Activated CD4-positive, alpha-beta T cell treated with anti-CD3 and anti-CD28 coated beads for 36 hours (primary cell): ENCODE measurements at regions of chr7 and their contacts with region 1.

Region 1: DNA sequence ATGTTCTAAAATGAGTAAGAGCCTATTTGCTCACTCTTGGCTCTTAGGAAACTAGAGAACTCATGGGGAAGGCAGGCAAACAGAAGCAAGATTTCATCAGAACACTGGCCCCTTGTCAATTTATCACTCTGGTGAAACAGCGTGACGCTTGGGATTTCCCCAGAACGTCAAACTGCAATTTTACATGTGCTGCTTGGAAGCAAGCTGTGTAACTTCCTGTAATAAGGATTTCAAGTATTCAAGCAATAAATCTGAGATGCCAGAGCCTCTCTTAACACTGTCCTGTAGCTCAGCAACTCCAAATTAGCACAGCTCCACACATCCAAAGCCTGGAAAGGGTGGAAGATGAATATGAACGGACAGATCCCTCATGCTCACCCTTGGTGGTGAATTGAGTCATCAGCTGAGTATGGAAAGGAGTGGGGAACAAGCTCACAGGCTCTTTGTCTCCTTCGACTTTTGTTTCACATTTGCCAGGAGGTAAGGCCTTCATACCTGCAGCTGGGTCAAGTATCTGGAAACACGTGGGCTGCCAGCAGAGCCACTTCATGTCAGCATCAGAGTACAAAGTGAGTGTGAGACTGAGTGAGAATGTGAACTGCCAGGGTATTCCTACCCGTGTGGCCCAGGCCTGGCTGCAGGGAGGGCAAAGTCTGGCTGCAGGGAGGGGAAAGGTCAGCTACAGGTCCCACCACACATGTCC is 140.4 kb upstream of the NAMPT start:
- DNase-seq: peak; percentile 89
- ATAC-seq: peak; percentile 79
- H3K4me3 Mint-ChIP-seq: peak overlapping the region; percentile 70
- H3K27ac Mint-ChIP-seq: peak overlapping the region; percentile 99
- H3K4me1 Mint-ChIP-seq: peaks cover 88% of the 10 kb centered on the region
- H3K27me3 Mint-ChIP-seq: peaks cover 2% of the 10 kb centered on the region

Region 2: DNA sequence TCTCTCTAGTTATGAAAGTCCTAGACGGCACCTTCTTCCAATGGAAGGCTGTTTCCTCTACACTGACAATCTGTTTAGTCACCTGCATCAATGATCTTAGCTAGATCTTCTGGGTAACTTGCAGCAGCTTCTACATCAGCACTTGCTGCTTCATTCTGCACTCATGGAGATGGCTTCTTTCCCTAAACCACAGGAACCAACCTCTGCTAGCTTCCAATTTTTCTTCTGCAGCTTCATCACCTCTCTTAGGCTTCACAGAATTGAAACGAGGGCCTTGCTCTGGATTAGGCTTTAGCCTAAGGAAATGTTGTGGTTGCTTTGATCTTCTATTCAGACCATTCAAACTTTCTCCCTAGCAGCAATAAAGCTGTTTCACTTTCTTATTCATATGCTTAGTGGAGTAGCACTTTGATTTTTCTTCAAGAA is 165.0 kb before region 1 on chr7:
- CTCF ChIA-PET with region 1: no interaction called
- POLR2A ChIA-PET with region 1: interaction called, 4 read pairs
- intact Hi-C with region 1: loop called in 1 of 2 experiments (anchors 1 kb)
- DNase-seq: no peak
- ATAC-seq: peak; percentile 21
- H3K4me3 Mint-ChIP-seq: no peak overlapping the region
- H3K27ac Mint-ChIP-seq: peak overlapping the region; percentile 83
- H3K4me1 Mint-ChIP-seq: peaks cover 81% of the 10 kb centered on the region
- H3K27me3 Mint-ChIP-seq: no peaks in the 10 kb centered on the region

Region 3: DNA sequence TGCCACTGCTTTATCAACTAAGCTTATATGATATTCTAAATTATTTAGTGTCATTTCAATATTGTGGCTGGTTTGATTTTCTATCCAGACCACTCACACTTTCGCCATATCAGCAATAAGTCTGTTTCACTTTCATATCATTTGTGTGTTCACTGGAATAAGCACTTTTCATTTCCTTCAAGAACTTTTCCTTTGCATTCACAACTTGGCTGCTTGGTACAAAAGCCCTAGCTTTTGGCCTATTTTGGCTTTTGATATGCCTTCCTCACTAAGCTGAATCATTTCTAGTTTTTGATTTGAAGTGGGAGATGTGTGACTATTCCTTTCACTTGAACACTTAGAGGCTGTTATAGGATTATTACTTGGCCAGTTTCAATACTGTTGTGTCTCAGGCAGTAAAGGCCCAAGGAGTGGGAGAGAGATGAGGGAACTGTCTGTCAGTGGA is 19.4 kb before region 1 on chr7:
- CTCF ChIA-PET with region 1: interaction called, 5 read pairs
- POLR2A ChIA-PET with region 1: interaction called, 13 read pairs
- intact Hi-C with region 1: loop called (anchors 1 kb)
- DNase-seq: peak; percentile 39
- ATAC-seq: peak; percentile 98
- H3K4me3 Mint-ChIP-seq: peak overlapping the region; percentile 8
- H3K27ac Mint-ChIP-seq: peak overlapping the region; percentile 55
- H3K4me1 Mint-ChIP-seq: peaks cover 38% of the 10 kb centered on the region
- H3K27me3 Mint-ChIP-seq: peaks cover 35% of the 10 kb centered on the region

Region 4: DNA sequence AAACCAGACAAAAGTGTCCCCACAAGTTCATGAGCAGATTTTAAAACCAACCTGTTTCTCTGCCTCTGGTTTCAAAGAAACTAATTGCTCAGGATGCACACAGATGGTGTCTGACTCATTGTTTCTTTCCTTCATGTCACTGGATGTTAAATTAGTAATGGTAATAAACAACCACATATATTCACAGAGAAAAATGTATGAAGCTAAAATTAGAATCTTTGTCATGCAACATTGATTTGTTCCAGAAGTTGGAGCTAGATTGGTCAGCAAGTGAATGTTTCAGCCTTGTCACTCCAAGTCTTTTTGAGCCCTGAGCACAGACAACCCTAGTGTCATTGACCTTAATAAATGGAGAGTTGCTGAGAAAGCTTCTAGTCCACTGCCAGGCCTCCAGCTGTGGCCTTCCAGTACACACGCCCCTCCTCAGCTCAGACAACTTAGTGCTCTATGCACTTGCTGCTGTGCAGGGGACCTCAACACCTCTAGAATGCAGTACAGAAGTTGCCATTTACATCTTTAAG is 59.9 kb after region 1 on chr7:
- CTCF ChIA-PET with region 1: interaction called, 5 read pairs
- POLR2A ChIA-PET with region 1: interaction called, 12 read pairs
- intact Hi-C with region 1: loop called (anchors 1 kb)
- DNase-seq: no peak
- ATAC-seq: peak; percentile 73
- H3K4me3 Mint-ChIP-seq: no peak overlapping the region
- H3K27ac Mint-ChIP-seq: peak overlapping the region; percentile 80
- H3K4me1 Mint-ChIP-seq: peaks cover 60% of the 10 kb centered on the region
- H3K27me3 Mint-ChIP-seq: peaks cover 10% of the 10 kb centered on the region

Region 5: DNA sequence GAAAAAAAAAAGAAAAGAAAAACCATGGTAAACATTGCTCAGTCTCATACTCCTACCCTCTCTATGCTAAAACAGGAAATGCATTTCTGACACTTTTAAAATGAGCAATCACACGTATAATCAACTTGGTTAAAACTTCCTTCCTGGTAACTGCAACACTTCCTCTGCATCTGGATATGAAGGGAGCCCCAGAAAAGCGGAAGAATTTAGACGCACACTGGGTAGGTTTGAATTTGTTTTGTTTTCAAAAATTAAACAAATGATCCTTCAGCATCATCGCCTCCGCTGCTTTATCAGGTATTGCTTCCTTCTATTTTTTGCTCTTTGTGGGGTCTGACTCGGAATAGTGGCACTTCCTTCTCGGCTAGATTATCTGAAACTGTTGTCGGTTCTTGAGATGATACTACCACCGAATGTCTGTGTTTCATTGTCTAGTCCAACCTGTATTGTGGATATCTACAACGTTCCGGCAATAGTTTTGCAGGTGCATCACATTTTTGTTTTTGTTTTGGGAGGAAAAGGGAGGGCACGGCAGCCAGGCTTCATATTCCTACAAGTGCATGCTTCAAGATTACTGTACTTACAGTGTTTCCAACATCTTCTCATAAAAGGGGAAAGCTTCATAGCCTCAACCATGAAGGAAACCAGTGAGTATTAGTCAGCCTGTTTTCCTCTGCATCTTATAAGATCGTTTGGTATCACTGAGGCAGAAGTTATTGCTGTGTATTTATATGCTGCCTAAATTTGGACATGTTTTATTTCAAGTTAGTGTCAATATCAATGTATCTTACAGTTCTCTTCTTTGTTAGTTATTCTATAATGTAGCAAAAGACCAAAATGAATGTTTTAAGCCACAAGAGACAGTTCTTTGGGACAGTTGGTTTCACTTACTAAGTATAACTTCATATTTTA is 440.2 kb after region 1 on chr7 and contains the start of gene PIK3CG:
- CTCF ChIA-PET with region 1: no interaction called
- POLR2A ChIA-PET with region 1: no interaction called
- intact Hi-C with region 1: loop called in 1 of 2 experiments (anchors 5 kb)
- DNase-seq: no peak
- ATAC-seq: peak; percentile 79
- H3K4me3 Mint-ChIP-seq: peak within 1 kb of the TSS; percentile 83
- H3K27ac Mint-ChIP-seq: peak within 1 kb of the TSS; percentile 92
- H3K4me1 Mint-ChIP-seq: peaks cover 75% of the 10 kb centered on the region
- H3K27me3 Mint-ChIP-seq: no peaks in the 10 kb centered on the region
- total RNA-seq, gene PIK3CG: 9.9 to 14.3 TPM